ENCODE measurements at regions of chr16 and their contacts with region 1.

Region 1: GRCh38 chr16:85554112-85554813 is 58.9 kb upstream of the GSE1 start:
- DNase-seq: no peak
- ATAC-seq: peak; percentile 4; the same call in 1 of the 2 replicates
- H3K4me3 Mint-ChIP-seq: peak overlapping the region; percentile 89
- H3K27ac Mint-ChIP-seq: peak overlapping the region; percentile 85
- H3K4me1 Mint-ChIP-seq: peaks cover 44% of the 10 kb centered on the region
- H3K27me3 Mint-ChIP-seq: peaks cover 8% of the 10 kb centered on the region
- CTCF ChIP-seq: no peak

Region 2: GRCh38 chr16:85437166-85438055 is 116.9 kb before region 1 on chr16:
- CTCF ChIA-PET with region 1: interaction called, 22 read pairs
- POLR2A ChIA-PET with region 1: no interaction called
- DNase-seq: no peak
- ATAC-seq: peak; percentile 21
- H3K4me3 Mint-ChIP-seq: peak overlapping the region; percentile 50
- H3K27ac Mint-ChIP-seq: peak overlapping the region; percentile 51; the same call in 1 of the 2 replicates
- H3K4me1 Mint-ChIP-seq: peaks cover 39% of the 10 kb centered on the region
- H3K27me3 Mint-ChIP-seq: no peaks in the 10 kb centered on the region
- CTCF ChIP-seq: no peak

Region 3: DNA sequence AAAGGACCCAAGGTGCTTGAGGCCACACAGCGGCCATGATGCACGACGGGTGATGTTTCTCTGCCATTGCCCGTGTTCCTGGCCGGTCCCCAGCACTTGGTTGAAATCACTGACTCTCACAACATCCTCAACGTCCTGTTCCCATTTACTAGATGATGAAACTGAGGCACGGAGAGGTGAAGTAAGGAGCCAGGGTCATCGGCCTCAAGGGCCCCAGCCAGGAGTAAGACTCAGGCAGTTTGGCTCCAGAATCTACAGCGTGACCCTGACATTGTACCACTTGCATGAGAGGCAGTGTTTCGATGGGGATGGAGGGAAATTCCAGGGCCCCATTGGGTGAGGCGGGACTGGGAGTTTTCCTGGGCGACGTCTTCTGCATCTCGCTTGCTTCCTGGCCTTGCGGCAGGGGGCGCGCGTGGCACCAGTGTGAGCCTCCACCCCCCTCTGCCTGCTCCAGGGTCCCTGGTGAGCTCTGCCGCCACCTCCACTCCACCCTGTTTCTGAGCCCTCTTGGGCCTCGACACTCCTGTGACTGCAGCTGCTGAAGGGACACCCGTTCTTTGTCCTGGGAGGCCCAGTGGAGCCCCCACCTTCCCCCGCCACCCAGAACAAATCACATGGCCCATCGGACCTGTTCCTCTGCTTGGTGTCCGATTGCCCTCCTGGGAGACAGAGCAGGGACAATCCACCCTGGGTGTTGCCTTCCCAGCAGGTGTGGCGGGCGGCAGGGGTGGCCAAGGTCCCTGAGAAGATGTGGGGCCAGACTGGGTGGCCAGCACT is 74.1 kb before region 1 on chr16:
- CTCF ChIA-PET with region 1: interaction called, 10 read pairs
- POLR2A ChIA-PET with region 1: no interaction called
- DNase-seq: peak; percentile 64
- ATAC-seq: peak; percentile 74
- H3K4me3 Mint-ChIP-seq: no peak overlapping the region
- H3K27ac Mint-ChIP-seq: no peak overlapping the region
- H3K4me1 Mint-ChIP-seq: peaks cover 9% of the 10 kb centered on the region
- H3K27me3 Mint-ChIP-seq: no peaks in the 10 kb centered on the region
- CTCF ChIP-seq: no peak

Region 4: GRCh38 chr16:85564277-85565051 is 10.2 kb after region 1 on chr16:
- CTCF ChIA-PET with region 1: interaction called, 60 read pairs
- POLR2A ChIA-PET with region 1: no interaction called
- DNase-seq: no peak
- ATAC-seq: no peak
- H3K4me3 Mint-ChIP-seq: no peak overlapping the region
- H3K27ac Mint-ChIP-seq: peak overlapping the region; percentile 73
- H3K4me1 Mint-ChIP-seq: peaks cover 83% of the 10 kb centered on the region
- H3K27me3 Mint-ChIP-seq: no peaks in the 10 kb centered on the region
- CTCF ChIP-seq: peak; percentile 58

Region 5: DNA sequence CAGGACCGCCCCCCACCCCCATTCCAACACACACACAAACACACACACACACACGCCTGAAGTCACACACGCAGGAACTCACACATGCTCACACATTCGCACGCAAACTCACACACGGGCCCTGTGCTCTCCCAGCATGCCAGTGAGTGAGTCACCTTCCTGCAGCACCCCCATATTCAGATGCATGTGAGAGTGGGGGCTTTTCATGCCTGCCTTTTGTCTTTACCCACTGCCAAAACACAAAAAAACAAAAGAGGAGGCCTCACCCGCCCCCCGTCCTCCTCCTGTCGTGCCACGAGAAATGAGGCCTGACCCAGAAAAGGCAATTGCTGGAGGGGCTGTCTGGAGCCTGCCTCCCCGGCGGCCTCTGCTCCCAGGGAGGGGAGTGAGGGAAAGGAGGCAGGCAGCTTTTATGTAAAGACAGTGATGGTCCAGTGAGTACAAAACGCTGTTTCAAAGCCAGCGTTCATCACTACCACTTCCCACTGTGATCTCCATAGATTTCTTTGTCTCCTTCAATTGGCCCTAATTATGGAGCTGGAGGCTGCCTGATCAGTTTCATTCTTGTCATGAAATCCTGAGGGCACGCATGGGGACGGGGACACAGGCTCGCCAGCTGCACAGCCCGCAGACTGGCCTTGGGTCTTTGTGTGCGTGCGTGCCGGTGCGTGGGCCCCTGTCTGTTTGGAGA is 29.4 kb after region 1 on chr16:
- CTCF ChIA-PET with region 1: interaction called, 15 read pairs
- POLR2A ChIA-PET with region 1: interaction called, 6 read pairs
- DNase-seq: no peak
- ATAC-seq: peak; percentile 2; the same call in 1 of the 2 replicates
- H3K4me3 Mint-ChIP-seq: peak overlapping the region; percentile 35; the same call in 1 of the 2 replicates
- H3K27ac Mint-ChIP-seq: peak overlapping the region; percentile 60; the same call in 1 of the 2 replicates
- H3K4me1 Mint-ChIP-seq: peaks cover 96% of the 10 kb centered on the region
- H3K27me3 Mint-ChIP-seq: peaks cover 63% of the 10 kb centered on the region
- CTCF ChIP-seq: no peak